H1 (cell line): ENCODE measurements at regions of chr10 and their contacts with region 1.

Region 1: GRCh38 chr10:72308320-72308987 is 34.7 kb downstream of the DDIT4 start:
- DNase-seq: no peak
- H3K4me3 ChIP-seq: no peak overlapping the region
- H3K27ac ChIP-seq: no peak overlapping the region
- H3K4me1 ChIP-seq: peaks cover 0 to 14% (median 12%) of the 10 kb centered on the region in 4 experiments; a peak in 6 of 7 replicates
- H3K27me3 ChIP-seq: peaks cover 0 to 3% (median 0%) of the 10 kb centered on the region in 4 experiments; a peak in 1 of 7 replicates
- CTCF ChIP-seq: no peak
- EP300 ChIP-seq: no peak
- POLR2A ChIP-seq: no peak
- RAD21 ChIP-seq: no peak

Region 2: GRCh38 chr10:72297968-72298773 is 10.3 kb before region 1 on chr10:
- CTCF ChIA-PET with region 1: interaction called, 8 read pairs
- POLR2A ChIA-PET with region 1: interaction called, 11 read pairs
- DNase-seq: peak; percentile 77 to 96
- H3K4me3 ChIP-seq: peak overlapping the region; percentile 43 to 70 (median 56)
- H3K27ac ChIP-seq: peak overlapping the region; percentile 51
- H3K4me1 ChIP-seq: peaks cover 5 to 21% (median 12%) of the 10 kb centered on the region in 4 experiments
- H3K27me3 ChIP-seq: no peaks in the 10 kb centered on the region; a peak in 1 of 7 replicates
- CTCF ChIP-seq: peak in 1 of 3 experiments; percentile 5; a peak in 1 of 4 replicates
- EP300 ChIP-seq: no peak
- POLR2A ChIP-seq: peak in 1 of 2 experiments; percentile 13; a peak in 1 of 3 replicates
- RAD21 ChIP-seq: no peak